A673 (cell line): ENCODE measurements at regions of chr1 and their contacts with region 1.

Region 1: GRCh38 chr1:223001653-223002634 is 141.1 kb downstream of the TLR5 start:
- DNase-seq: peak; percentile 49
- H3K4me3 ChIP-seq: no peak overlapping the region
- H3K27ac ChIP-seq: no peak overlapping the region
- H3K4me1 ChIP-seq: peaks cover 11% of the 10 kb centered on the region
- H3K27me3 ChIP-seq: no peaks in the 10 kb centered on the region
- CTCF ChIP-seq: peak; percentile 23; the same call in 1 of the 2 replicates

Region 2: DNA sequence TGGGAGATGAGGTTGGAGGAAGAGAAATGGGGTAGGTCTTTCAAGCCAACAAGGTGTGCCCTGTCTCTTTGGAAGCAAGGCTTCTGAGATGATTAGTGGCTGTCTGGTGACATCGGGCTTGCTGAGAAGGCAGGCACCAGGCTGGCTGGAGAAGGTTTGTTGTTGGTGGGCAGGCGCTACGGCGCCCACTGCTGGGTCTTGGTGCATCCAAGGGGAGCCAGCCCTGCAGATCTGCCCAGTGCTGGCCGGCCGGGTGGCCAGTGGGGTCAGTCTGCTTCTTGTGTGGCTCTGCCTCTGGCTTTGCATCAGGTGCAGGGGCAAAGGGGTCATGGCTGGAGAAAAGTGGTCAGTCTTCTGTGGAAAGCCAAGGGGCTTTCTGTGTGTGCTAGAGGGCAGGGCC is 14.9 kb after region 1 on chr1:
- CTCF ChIA-PET with region 1: no interaction called
- POLR2A ChIA-PET with region 1: no interaction called
- intact Hi-C with region 1: loop called (anchors 1 kb)
- DNase-seq: no peak
- H3K4me3 ChIP-seq: no peak overlapping the region
- H3K27ac ChIP-seq: no peak overlapping the region
- H3K4me1 ChIP-seq: peaks cover under 1% of the 10 kb centered on the region
- H3K27me3 ChIP-seq: no peaks in the 10 kb centered on the region
- CTCF ChIP-seq: no peak